ENCODE measurements at regions of chr17 and their contacts with region 1.

Region 1: DNA sequence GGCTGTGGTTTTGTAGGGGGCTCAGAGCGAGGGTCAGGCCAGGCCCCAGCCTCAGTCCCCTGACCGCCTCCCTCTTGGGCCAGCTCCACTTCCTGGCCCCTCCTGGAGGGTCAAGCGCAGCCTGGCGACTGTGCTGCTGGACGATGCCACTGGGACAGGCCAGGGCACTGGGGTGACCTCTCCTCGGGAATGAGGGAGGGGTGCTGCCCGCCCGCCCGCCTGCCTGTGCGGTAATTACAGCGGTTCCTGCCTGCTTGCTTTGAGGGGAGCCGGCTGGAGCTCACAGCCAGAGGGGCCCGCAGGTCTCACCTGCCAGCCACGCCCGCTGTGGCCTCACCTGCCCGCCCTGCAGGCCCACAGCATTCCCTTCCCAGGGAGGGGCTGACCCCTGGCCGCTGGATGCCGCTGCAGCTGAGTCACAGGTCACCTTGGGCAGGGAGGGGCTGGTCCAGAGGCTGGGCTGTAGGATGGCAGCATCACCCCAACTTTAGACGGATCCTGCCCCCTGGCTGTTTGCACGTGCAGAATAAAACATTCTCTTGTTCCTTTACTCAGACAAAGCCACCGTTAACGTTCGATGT is 76.7 kb upstream of the CBX4 start:
- DNase-seq: peak in 1 of 2 donors; percentile 48
- ATAC-seq: peak in 1 of 3 donors; percentile 37
- H3K4me3 ChIP-seq: no peak overlapping the region
- H3K4me3 Mint-ChIP-seq: no peak overlapping the region
- H3K27ac ChIP-seq: no peak overlapping the region
- H3K27ac Mint-ChIP-seq: no peak overlapping the region
- H3K4me1 ChIP-seq: no peaks in the 10 kb centered on the region
- H3K4me1 Mint-ChIP-seq: no peaks in the 10 kb centered on the region
- H3K27me3 ChIP-seq: no peaks in the 10 kb centered on the region
- H3K27me3 Mint-ChIP-seq: peaks cover 9 to 10% of the 10 kb centered on the region in 2 donors
- CTCF ChIP-seq: no peak

Region 2: DNA sequence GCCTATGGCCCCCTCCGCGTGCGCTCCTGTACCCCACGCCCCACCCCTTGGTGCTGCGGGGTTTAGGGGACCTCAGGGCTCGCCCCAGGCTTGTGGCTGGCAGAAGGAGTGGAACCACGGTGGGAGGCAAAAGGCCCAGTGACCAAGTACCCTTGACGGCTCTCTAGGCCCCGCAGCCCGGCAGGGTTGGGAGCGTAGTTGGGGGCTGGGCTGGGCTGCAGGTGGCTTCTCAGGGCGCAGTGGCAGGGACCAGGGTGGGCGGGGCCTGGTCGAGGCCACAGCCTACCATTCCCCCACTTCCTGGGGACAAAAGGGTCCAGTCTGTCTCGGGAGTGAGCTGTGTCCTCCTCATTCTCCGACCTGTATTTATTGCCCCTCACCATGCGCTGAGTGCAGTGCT is 429.9 kb before region 1 on chr17:
- intact Hi-C with region 1: no loop called
- DNase-seq: no peak
- ATAC-seq: no peak
- H3K4me3 ChIP-seq: no peak overlapping the region
- H3K4me3 Mint-ChIP-seq: no peak overlapping the region
- H3K27ac ChIP-seq: no peak overlapping the region
- H3K27ac Mint-ChIP-seq: no peak overlapping the region
- H3K4me1 ChIP-seq: no peaks in the 10 kb centered on the region
- H3K4me1 Mint-ChIP-seq: peaks cover 10 to 50% of the 10 kb centered on the region in 2 donors
- H3K27me3 ChIP-seq: peaks cover 11% of the 10 kb centered on the region
- H3K27me3 Mint-ChIP-seq: peaks cover 23 to 31% of the 10 kb centered on the region in 2 donors
- CTCF ChIP-seq: no peak

Region 3: DNA sequence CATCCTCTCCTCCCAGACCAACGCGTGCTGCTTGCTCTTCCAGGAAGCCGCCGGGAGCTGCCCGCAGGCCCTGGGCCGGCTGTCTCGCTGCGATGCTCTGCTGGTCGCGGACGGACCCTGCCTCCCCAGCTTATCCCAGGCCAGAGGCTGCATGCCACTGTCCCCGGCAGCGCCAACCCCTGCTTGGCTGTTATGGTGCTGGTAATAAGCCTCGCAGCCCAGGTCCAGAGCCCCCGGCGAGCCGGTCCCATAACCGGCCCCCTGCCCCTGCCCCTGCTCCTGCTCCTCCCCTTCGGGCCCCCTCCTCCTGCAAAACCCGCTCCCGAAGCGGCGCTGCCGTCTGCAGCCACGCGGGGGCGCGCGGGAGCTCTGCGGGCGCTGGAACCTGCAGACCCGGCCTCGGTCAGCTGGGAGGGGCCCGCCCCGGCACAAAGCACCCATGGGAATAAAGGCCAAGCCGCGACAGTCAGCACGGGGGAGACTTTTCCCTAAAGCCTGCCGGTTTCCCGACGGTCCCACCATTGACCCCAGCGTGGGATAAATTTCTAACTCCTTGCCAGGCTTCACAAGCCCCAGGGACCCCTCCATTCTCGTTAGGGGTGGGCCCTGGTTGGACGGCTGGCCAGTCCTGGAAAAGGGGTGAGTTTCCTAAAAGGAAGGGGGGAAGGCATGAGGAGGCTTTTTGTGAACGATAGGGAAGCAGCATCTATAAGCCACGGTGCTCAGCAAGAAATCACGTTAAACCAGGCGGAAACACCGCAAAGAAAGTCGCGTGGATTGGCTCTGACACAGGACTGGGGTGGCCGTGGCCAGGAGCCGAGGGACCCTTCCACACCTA is 174.0 kb before region 1 on chr17:
- intact Hi-C with region 1: loop called (anchors 2 kb)
- DNase-seq: peak; percentile 76 to 82
- ATAC-seq: peak; percentile 58 to 75 (median 72)
- H3K4me3 ChIP-seq: no peak overlapping the region
- H3K4me3 Mint-ChIP-seq: no peak overlapping the region
- H3K27ac ChIP-seq: no peak overlapping the region
- H3K27ac Mint-ChIP-seq: no peak overlapping the region
- H3K4me1 ChIP-seq: peaks cover 14% of the 10 kb centered on the region
- H3K4me1 Mint-ChIP-seq: peaks cover 7 to 12% of the 10 kb centered on the region in 2 donors
- H3K27me3 ChIP-seq: peaks cover 23% of the 10 kb centered on the region
- H3K27me3 Mint-ChIP-seq: peaks cover 23 to 28% of the 10 kb centered on the region in 2 donors
- CTCF ChIP-seq: peak; percentile 88

Region 4: GRCh38 chr17:79789534-79790353 is 126.2 kb before region 1 on chr17:
- intact Hi-C with region 1: loop called (anchors 10 kb)
- DNase-seq: peak in 1 of 2 donors; percentile 57
- ATAC-seq: peak; percentile 53 to 76 (median 56)
- H3K4me3 ChIP-seq: no peak overlapping the region
- H3K4me3 Mint-ChIP-seq: peak overlapping the region; percentile 35
- H3K27ac ChIP-seq: no peak overlapping the region
- H3K27ac Mint-ChIP-seq: no peak overlapping the region
- H3K4me1 ChIP-seq: peaks cover 26% of the 10 kb centered on the region
- H3K4me1 Mint-ChIP-seq: no peaks in the 10 kb centered on the region
- H3K27me3 ChIP-seq: peaks cover 51% of the 10 kb centered on the region
- H3K27me3 Mint-ChIP-seq: peaks cover 32 to 49% of the 10 kb centered on the region in 2 donors
- CTCF ChIP-seq: peak; percentile 70

Region 5: DNA sequence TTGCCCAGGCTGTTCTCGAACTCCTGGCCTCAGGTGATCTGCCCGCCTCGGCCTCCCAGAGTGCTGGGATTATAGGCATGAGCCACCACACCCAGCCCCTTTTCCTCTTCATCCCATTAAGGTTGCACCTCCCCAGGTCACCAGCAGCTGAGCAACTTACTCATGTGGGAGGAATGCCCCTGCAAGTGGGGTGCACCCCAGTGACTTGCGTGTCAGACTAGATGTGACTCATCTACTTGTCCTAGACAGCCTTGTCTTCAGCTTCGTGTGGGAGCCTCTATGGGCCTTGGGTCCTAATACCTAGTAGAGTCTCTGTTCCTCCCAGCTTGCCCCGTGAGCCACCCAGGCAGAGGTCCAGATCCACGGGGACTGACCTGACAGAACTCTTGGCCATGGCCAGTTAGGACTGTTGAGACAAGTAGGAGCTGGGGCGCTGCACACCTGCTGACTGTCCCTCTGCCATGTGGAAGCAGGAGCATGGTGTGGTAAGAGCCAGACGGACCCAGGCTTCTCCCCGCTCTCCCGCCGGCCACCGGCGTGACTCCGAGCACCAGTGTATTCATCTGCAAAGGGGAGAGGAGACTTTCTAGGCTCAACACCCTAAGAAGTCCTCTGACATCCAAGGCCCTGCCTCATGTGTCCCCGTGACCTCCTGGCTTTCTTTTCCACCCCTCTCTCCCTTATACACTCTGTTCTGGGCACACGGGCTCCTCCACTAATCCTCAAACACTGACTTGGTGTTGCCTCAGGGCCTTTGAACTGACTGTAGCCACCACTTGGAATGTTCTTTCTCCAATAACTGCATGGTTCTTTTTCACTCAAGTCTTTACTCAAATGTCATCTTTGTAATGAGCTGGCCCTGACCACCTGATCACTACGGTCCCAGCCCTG is 65.1 kb before region 1 on chr17:
- intact Hi-C with region 1: no loop called
- DNase-seq: no peak
- ATAC-seq: peak in 1 of 3 donors; percentile 12
- H3K4me3 ChIP-seq: no peak overlapping the region
- H3K4me3 Mint-ChIP-seq: no peak overlapping the region
- H3K27ac ChIP-seq: no peak overlapping the region
- H3K27ac Mint-ChIP-seq: no peak overlapping the region
- H3K4me1 ChIP-seq: peaks cover 2% of the 10 kb centered on the region
- H3K4me1 Mint-ChIP-seq: peaks cover 0 to 5% of the 10 kb centered on the region in 2 donors
- H3K27me3 ChIP-seq: no peaks in the 10 kb centered on the region
- H3K27me3 Mint-ChIP-seq: peaks cover 21 to 26% of the 10 kb centered on the region in 2 donors
- CTCF ChIP-seq: no peak

Measured in natural killer cell (primary cell).